K562 (cell line): ENCODE measurements at regions of chr3 and their contacts with region 1.

Region 1: DNA sequence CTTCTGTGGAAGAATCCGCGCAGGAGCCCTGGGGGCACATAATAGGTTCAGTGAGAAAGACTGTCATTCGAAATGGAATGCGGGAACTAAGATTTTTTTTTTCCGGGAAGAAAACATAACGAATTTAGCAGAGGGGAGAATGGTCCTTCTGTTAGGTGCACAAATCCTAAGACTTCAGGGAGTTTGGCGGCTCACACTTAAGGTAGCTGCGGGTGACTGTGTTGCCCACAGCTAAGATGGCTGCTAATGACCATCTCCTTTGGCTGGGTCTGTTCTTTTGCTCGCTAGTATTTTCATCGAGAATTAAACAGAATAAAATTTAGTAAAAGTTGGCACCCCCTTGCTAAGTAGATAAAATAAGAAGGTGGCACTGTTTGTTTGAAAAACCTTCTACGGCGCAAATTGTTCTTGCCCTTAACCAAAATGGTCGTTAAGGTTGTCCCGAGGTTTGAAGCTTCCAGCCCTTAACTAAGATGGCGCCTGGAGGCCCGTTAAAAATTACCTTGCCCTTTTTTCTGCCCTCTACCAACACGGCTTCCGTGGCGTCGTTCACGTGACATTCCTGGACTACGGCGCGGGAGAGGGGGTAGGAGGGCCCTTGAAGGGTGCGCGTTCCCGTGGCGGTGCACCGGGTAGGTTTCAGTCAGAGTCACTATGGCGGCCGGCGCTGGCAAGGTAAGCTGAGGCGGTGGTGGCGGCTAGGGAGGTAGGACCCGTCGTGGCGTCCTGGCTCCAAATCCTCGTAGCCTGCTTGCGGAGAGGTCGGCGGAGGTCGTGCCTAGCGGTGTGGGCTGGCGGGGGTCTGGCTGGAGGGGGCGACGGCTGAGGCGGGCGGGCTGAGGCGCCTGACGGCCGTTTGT is at the start of gene SLMAP:
- DNase-seq: peak; percentile 76 to 94 (median 82)
- ATAC-seq: peak; percentile 91
- H3K4me3 ChIP-seq: peak within 1 kb of the TSS; percentile 71
- H3K27ac ChIP-seq: peak within 1 kb of the TSS; percentile 96
- H3K4me1 ChIP-seq: peaks cover 0 to 18% of the 10 kb centered on the region in 2 experiments; a peak in 3 of 5 replicates
- H3K27me3 ChIP-seq: no peaks in the 10 kb centered on the region
- CTCF ChIP-seq: 0 out of 6 replicates have a peak, but pooled peaks of 1 of the 3 experiments have one; percentile 0
- EP300 ChIP-seq: no peak
- POLR2A ChIP-seq: peak; percentile 84
- RAD21 ChIP-seq: no peak
- polyA plus RNA-seq, gene SLMAP: 12.1 to 12.7 TPM

Region 2: GRCh38 chr3:57597122-57597923 is 158.6 kb before region 1 on chr3 and contains the start of gene ARF4:
- CTCF ChIA-PET with region 1: no interaction called
- POLR2A ChIA-PET with region 1: interaction called, 5 read pairs
- in situ Hi-C with region 1: no loop called
- intact Hi-C with region 1: loop called (anchors 2 kb)
- DNase-seq: peak; percentile 93 to 98 (median 94)
- ATAC-seq: peak; percentile 90
- H3K4me3 ChIP-seq: peak within 1 kb of the TSS; percentile 85
- H3K27ac ChIP-seq: peak within 1 kb of the TSS; percentile 97
- H3K4me1 ChIP-seq: peaks cover 15 to 16% of the 10 kb centered on the region in 2 experiments; a peak in 4 of 5 replicates
- H3K27me3 ChIP-seq: no peaks in the 10 kb centered on the region
- CTCF ChIP-seq: peak; percentile 23 to 50 (median 37); a peak in 4 of 6 replicates
- EP300 ChIP-seq: no peak; the same call in none of the 2 replicates
- POLR2A ChIP-seq: peak; percentile 97
- RAD21 ChIP-seq: no peak
- polyA plus RNA-seq, gene ARF4: 226 to 273 TPM

Region 3: GRCh38 chr3:57692259-57693147 is 63.4 kb before region 1 on chr3 and contains the start of gene DENND6A:
- CTCF ChIA-PET with region 1: no interaction called
- POLR2A ChIA-PET with region 1: interaction called, 4 read pairs
- in situ Hi-C with region 1: no loop called
- intact Hi-C with region 1: loop called (anchors 5 kb)
- DNase-seq: peak; percentile 92 to 95 (median 94)
- ATAC-seq: peak; percentile 97
- H3K4me3 ChIP-seq: peak within 1 kb of the TSS; percentile 73
- H3K27ac ChIP-seq: peak within 1 kb of the TSS; percentile 95
- H3K4me1 ChIP-seq: peaks cover 4 to 7% of the 10 kb centered on the region in 2 experiments; a peak in 3 of 5 replicates
- H3K27me3 ChIP-seq: no peaks in the 10 kb centered on the region
- CTCF ChIP-seq: 0 out of 6 replicates have a peak, but pooled peaks of 1 of the 3 experiments have one; percentile 1
- EP300 ChIP-seq: no peak
- POLR2A ChIP-seq: peak; percentile 90
- RAD21 ChIP-seq: no peak
- polyA plus RNA-seq, gene DENND6A: 1.5 to 2.0 TPM

Region 4: GRCh38 chr3:57793737-57794187 is 37.9 kb after region 1 on chr3:
- CTCF ChIA-PET with region 1: no interaction called
- POLR2A ChIA-PET with region 1: no interaction called
- in situ Hi-C with region 1: no loop called
- intact Hi-C with region 1: loop called (anchors 2 kb)
- DNase-seq: peak in 1 of 4 experiments; percentile 57
- ATAC-seq: peak; percentile 65
- H3K4me3 ChIP-seq: no peak overlapping the region
- H3K27ac ChIP-seq: peak overlapping the region; percentile 78
- H3K4me1 ChIP-seq: peaks cover 6 to 44% of the 10 kb centered on the region in 2 experiments; a peak in 4 of 5 replicates
- H3K27me3 ChIP-seq: no peaks in the 10 kb centered on the region
- CTCF ChIP-seq: no peak
- EP300 ChIP-seq: peak; percentile 5; the same call in 1 of the 2 replicates
- POLR2A ChIP-seq: no peak
- RAD21 ChIP-seq: no peak

Region 5: GRCh38 chr3:57826245-57826951 is 70.5 kb after region 1 on chr3:
- CTCF ChIA-PET with region 1: no interaction called
- POLR2A ChIA-PET with region 1: interaction called, 3 read pairs
- in situ Hi-C with region 1: no loop called
- intact Hi-C with region 1: loop called (anchors 2 kb)
- DNase-seq: no peak
- ATAC-seq: no peak
- H3K4me3 ChIP-seq: no peak overlapping the region
- H3K27ac ChIP-seq: no peak overlapping the region
- H3K4me1 ChIP-seq: no peaks in the 10 kb centered on the region; a peak in 1 of 5 replicates
- H3K27me3 ChIP-seq: no peaks in the 10 kb centered on the region
- CTCF ChIP-seq: peak in 1 of 3 experiments; percentile 55; a peak in 2 of 6 replicates
- EP300 ChIP-seq: no peak
- POLR2A ChIP-seq: no peak
- RAD21 ChIP-seq: peak; percentile 55 to 69